ENCODE measurements at regions of chr14 and their contacts with region 1.

Region 1: DNA sequence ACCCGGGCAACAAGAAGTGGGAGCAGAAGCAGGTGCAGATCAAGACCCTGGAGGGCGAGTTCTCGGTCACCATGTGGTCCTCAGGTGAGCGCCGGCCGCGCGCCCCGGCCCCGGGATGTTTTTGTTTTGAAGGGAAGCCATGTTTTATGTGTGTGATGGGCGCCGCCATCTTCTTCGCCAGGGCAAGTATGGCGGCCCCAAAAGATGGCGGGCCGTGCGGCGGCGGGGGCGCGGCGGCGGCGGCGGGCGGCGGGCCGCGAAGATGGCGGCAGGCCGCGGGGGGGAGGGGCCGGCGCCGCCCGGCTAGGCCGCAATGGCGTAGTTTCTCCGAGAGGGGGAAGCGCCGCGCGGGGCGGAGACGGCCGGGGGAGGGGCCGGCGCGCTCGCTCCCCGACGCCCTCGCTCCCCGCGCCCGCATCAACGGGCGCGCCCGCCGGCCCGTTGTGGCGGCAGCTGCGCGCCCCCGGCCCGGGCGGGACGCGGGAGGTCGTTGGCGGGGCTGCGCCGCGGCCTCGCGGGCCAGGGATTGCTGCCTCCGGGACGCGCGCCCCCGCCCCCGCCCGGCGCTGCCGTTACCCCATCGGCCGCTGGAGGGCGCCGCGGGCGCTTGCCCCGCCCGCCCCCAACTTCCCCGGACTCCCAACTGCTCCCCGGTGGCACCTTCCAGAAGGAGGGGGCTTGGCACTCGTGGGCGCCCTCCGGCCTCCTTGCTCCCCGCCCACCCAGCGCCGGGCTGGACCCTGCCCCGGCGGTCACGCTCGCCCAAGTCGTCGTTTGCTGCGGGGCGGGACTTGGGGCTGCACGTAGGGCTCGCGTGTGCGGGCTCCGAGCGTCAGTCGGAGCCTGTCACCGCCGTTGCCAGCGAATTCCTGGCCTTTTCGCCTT is 1.1 kb downstream of the YY1 start:
- DNase-seq: peak; percentile 83
- H3K4me3 Mint-ChIP-seq: peak overlapping the region; percentile 92
- H3K27ac Mint-ChIP-seq: peak overlapping the region; percentile 90
- H3K4me1 Mint-ChIP-seq: peaks cover 54% of the 10 kb centered on the region
- H3K27me3 Mint-ChIP-seq: no peaks in the 10 kb centered on the region

Region 2: DNA sequence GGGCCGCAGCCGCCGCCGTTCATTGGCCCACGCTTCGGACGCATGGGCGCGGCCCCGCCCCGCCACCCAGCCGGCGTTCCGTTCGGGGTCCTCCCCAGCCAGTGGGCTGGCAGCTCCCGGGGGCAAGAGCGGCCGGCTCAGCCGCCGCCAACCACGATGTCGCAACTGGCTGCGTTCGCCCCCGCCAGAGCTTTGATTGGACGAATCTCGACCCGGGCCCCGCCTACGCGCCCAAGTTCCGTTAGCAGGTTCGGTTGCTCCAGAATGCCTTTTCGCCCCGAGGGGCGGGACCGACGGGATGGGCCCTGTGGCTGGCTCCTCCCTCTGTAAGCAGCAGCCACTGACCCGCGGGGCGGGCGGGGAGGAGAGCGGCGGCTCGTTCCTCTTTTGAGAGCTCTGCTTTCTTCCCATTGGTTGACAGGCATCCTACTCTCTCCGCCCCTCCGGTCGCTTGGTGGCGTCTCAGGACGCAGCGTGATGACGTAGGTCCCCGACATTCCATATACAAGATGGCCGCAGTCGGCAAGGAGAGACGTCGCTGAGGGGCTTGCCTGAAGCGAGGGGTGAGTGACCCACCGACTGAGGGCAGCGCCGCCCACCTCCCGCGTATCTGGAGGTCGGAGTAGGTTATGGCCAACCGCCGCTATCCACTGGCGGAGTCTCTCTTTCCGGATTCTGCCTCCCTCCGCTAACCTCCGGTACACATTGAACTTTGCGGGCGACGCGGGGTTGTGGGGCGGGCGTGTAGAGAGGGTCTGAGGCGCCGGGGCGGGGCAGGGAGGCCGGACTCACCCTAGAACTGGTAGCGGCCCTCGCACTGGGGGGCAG is 759.0 kb before region 1 on chr14 and contains the start of gene CCNK:
- intact Hi-C with region 1: loop called (anchors 1 kb)
- DNase-seq: peak; percentile 100
- H3K4me3 Mint-ChIP-seq: peak within 1 kb of the TSS; percentile 98
- H3K27ac Mint-ChIP-seq: peak within 1 kb of the TSS; percentile 98
- H3K4me1 Mint-ChIP-seq: peaks cover 49% of the 10 kb centered on the region
- H3K27me3 Mint-ChIP-seq: no peaks in the 10 kb centered on the region
- total RNA-seq, gene CCNK: 80.8 and 87.1 TPM in 2 replicates

Region 3: GRCh38 chr14:99971087-99971940 is 268.8 kb before region 1 on chr14:
- intact Hi-C with region 1: loop called (anchors 2 kb)
- DNase-seq: peak; percentile 68
- H3K4me3 Mint-ChIP-seq: peak overlapping the region; percentile 80
- H3K27ac Mint-ChIP-seq: no peak overlapping the region
- H3K4me1 Mint-ChIP-seq: peaks cover 13% of the 10 kb centered on the region
- H3K27me3 Mint-ChIP-seq: peaks cover 21% of the 10 kb centered on the region

Region 4: DNA sequence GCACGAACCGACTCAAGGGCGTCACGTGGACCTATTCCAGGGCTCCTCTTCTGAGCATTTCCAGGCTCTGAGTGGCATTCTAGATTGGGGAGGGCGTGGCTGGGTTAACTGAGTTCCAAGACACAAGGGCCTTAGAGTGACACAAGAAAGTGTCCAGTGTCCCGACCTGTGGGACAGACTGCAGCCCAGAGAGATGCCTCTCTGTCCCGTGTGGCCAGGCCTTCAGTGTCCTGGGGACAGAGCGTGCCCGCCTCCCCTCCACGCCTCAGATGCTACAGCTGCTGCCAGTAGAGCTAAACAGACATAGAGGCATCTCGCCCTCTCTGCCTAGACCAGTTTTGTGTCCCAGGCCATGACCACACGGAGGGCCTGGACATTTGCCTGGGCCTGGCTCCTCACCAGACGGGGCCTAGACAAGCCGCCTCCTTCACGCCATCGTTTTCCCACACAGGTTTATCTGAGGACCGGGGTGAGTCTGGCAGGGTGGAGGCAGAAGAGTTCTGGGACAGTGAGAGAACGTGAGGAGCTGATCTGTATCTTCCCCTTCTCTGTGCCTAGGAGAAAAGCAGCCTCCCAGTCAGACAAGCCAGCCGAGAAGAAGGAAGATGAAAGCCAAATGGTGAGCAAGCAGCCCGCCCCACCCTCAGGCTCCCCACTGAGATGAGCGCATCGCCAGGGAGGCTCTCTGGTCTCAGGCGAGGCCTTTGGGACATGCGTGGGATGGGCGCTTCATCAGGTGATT is 107.8 kb before region 1 on chr14:
- intact Hi-C with region 1: no loop called
- DNase-seq: no peak
- H3K4me3 Mint-ChIP-seq: no peak overlapping the region
- H3K27ac Mint-ChIP-seq: no peak overlapping the region
- H3K4me1 Mint-ChIP-seq: no peaks in the 10 kb centered on the region
- H3K27me3 Mint-ChIP-seq: no peaks in the 10 kb centered on the region

Region 5: DNA sequence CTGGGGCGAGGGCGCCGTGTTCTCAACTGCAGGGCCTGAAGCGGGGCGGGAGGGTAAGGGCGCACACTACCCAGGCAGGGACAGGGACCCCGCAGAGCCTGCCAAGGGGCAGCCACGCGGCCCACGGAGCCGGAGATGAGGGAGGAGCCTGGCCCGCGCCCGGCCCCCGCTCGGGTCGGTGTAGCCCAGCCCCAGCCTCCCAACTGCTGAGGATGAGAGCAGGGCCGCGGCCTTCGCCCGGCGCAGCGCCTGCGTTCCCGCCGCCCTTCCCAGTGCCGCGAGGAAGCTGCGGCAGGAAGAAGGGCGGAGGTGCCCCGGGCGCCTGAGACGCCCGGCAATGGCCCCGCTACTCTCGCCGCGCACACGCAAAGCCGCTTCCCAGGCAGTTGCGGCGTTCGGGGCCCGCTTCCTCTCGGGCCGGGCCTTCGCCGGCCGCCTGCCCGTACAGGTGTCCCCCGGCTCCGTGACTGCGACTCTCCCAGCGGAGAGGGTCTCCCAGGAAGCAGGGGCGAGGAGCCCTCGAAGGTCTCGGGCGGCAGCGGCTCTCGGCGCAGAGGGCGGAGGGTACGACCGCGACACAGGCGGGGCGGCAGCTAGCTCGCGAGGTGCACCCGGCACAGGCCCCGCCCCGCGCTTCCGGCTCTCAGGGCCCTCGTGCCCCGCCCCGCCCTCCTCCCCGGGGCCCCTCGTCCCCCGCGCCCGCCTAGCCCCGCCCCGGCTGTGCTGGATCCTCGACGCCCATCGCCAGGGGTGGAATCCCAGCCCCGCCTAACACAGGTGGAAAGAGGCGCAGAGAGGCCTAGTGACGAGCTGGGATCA is 25.9 kb before region 1 on chr14:
- intact Hi-C with region 1: loop called (anchors 1 kb)
- DNase-seq: peak; percentile 88
- H3K4me3 Mint-ChIP-seq: peak overlapping the region; percentile 85
- H3K27ac Mint-ChIP-seq: peak overlapping the region; percentile 87
- H3K4me1 Mint-ChIP-seq: peaks cover 25% of the 10 kb centered on the region
- H3K27me3 Mint-ChIP-seq: peaks cover 2% of the 10 kb centered on the region

Region 6: DNA sequence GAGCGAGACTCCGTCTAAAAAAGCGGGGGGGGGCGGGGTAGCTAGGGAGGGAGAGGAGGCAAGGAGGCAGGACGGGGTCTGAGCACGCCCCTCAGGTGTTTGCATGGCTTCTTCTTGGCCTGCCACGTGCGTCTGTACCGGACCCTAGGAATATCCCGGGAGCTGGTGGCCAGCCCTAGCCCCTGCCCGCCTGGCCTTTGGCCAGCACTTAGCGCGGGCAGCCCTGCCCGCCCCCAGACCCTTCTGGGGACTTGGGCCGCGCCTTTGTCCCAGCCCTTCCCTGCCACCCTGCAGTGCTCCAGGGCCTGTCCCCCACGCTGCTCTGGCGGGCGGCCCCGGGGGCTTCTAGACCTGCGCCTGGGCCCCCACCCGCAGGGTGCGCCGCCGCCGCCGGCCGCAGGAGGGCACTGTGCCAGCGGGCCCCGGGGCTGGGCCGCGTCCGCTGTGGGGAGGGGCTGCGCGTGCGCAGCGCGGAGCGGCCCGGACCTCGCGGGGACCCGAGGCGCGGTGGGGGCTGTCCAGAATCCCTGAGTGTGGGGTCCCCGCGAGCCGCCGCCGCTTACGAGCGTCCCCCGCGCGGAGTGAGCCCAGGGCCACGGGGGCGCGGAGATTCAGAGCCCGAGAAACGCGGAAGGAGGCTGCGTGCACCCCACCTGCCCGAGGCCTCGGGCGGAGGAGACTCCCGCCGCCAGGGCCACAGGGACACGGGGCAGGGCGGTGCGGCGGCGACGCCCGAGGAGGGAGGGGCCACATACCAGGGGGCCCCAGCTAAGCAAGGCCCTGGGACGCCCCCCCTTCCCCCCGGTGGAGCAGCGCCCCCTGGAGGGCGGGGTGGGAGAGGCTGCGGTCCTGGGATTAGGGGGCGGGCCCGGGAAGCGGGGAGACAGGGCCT is 45.2 kb after region 1 on chr14:
- intact Hi-C with region 1: loop called (anchors 1 kb)
- DNase-seq: peak; percentile 77
- H3K4me3 Mint-ChIP-seq: no peak overlapping the region
- H3K27ac Mint-ChIP-seq: no peak overlapping the region
- H3K4me1 Mint-ChIP-seq: peaks cover 4% of the 10 kb centered on the region
- H3K27me3 Mint-ChIP-seq: no peaks in the 10 kb centered on the region